ENCODE measurements at regions of chr2 and their contacts with region 1.

Region 1: GRCh38 chr2:26615821-26616710 is 25.1 kb downstream of the CIB4 start:
- DNase-seq: peak in 1 of 2 donors; percentile 48
- H3K4me3 ChIP-seq: no peak overlapping the region
- H3K27ac ChIP-seq: no peak overlapping the region
- H3K4me1 ChIP-seq: peaks cover 0 to 42% (median 36%) of the 10 kb centered on the region in 4 donors
- H3K27me3 ChIP-seq: peaks cover 0 to 7% of the 10 kb centered on the region in 2 donors
- CTCF ChIP-seq: no peak

Region 2: GRCh38 chr2:24730481-24730880 is 1885.6 kb before region 1 on chr2:
- intact Hi-C with region 1: no loop called
- DNase-seq: no peak
- H3K4me3 ChIP-seq: no peak overlapping the region
- H3K27ac ChIP-seq: no peak overlapping the region
- H3K4me1 ChIP-seq: no peaks in the 10 kb centered on the region
- H3K27me3 ChIP-seq: no peaks in the 10 kb centered on the region
- CTCF ChIP-seq: no peak

Region 3: GRCh38 chr2:26530696-26531095 is 85.4 kb before region 1 on chr2:
- intact Hi-C with region 1: no loop called
- DNase-seq: peak in 1 of 2 donors; percentile 27
- H3K4me3 ChIP-seq: no peak overlapping the region
- H3K27ac ChIP-seq: no peak overlapping the region
- H3K4me1 ChIP-seq: peaks cover 0 to 3% (median 0%) of the 10 kb centered on the region in 4 donors
- H3K27me3 ChIP-seq: peaks cover 0 to 28% of the 10 kb centered on the region in 2 donors
- CTCF ChIP-seq: no peak

Region 4: GRCh38 chr2:26550276-26550950 is 65.7 kb before region 1 on chr2:
- intact Hi-C with region 1: no loop called
- DNase-seq: peak in 1 of 2 donors; percentile 35
- H3K4me3 ChIP-seq: no peak overlapping the region
- H3K27ac ChIP-seq: no peak overlapping the region
- H3K4me1 ChIP-seq: no peaks in the 10 kb centered on the region
- H3K27me3 ChIP-seq: peaks cover 0 to 25% of the 10 kb centered on the region in 2 donors
- CTCF ChIP-seq: no peak

Region 5: GRCh38 chr2:26685989-26686839 is 70.1 kb after region 1 on chr2:
- intact Hi-C with region 1: loop called (anchors 2 kb)
- DNase-seq: no peak
- H3K4me3 ChIP-seq: no peak overlapping the region
- H3K27ac ChIP-seq: no peak overlapping the region
- H3K4me1 ChIP-seq: peaks cover 0 to 22% (median 13%) of the 10 kb centered on the region in 4 donors
- H3K27me3 ChIP-seq: no peaks in the 10 kb centered on the region
- CTCF ChIP-seq: no peak

Region 6: GRCh38 chr2:26887151-26887550 is 271.1 kb after region 1 on chr2:
- intact Hi-C with region 1: no loop called
- DNase-seq: no peak
- H3K4me3 ChIP-seq: no peak overlapping the region
- H3K27ac ChIP-seq: no peak overlapping the region
- H3K4me1 ChIP-seq: no peaks in the 10 kb centered on the region
- H3K27me3 ChIP-seq: peaks cover 0 to 4% of the 10 kb centered on the region in 2 donors
- CTCF ChIP-seq: no peak